PC-9 (cell line): ENCODE measurements at regions of chr1 and their contacts with region 1.

Region 1: GRCh38 chr1:8169364-8170058 is 143.4 kb upstream of the ERRFI1 start:
- DNase-seq: peak; percentile 25 to 41
- H3K4me3 ChIP-seq: no peak overlapping the region
- H3K27ac ChIP-seq: peak overlapping the region; percentile 61
- H3K4me1 ChIP-seq: peaks cover 41% of the 10 kb centered on the region
- H3K27me3 ChIP-seq: no peaks in the 10 kb centered on the region
- CTCF ChIP-seq: no peak

Region 2: GRCh38 chr1:7988576-7988975 is 180.9 kb before region 1 on chr1:
- CTCF ChIA-PET with region 1: no interaction called
- POLR2A ChIA-PET with region 1: interaction called, 13 read pairs
- intact Hi-C with region 1: no loop called
- DNase-seq: peak; percentile 39 to 79
- H3K4me3 ChIP-seq: no peak overlapping the region
- H3K27ac ChIP-seq: peak overlapping the region; percentile 69
- H3K4me1 ChIP-seq: peaks cover 17% of the 10 kb centered on the region
- H3K27me3 ChIP-seq: no peaks in the 10 kb centered on the region
- CTCF ChIP-seq: no peak

Region 3: DNA sequence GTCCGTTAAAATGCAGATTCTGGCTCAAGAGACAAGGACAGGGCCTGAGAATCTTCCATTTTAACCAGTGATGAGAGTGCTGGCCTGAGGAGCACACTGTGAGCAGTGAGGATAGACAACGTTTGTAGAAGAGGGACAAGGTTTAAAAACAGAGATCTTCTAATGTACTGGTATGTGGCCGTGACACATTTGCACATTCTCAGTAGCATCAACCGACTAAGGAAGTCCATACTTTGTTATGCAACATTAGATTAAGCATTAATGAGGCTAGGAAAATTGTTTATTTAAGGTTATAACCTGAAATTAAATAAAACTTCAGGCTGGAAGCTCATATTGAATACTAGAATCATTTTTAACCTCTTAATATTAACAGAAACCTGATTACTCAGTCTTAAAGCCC is 247.3 kb after region 1 on chr1:
- CTCF ChIA-PET with region 1: no interaction called
- POLR2A ChIA-PET with region 1: interaction called, 12 read pairs
- intact Hi-C with region 1: no loop called
- DNase-seq: no peak
- H3K4me3 ChIP-seq: no peak overlapping the region
- H3K27ac ChIP-seq: no peak overlapping the region
- H3K4me1 ChIP-seq: peaks cover 15% of the 10 kb centered on the region
- H3K27me3 ChIP-seq: no peaks in the 10 kb centered on the region
- CTCF ChIP-seq: no peak